ENCODE measurements at regions of chr2 and their contacts with region 1.

Region 1: GRCh38 chr2:27264753-27265535 is 2.1 kb upstream of the SLC30A3 start:
- DNase-seq: no peak
- H3K4me3 ChIP-seq: peak overlapping the region; percentile 43
- CTCF ChIP-seq: peak; percentile 80

Region 2: GRCh38 chr2:27249891-27250651 is 14.9 kb before region 1 on chr2:
- CTCF ChIA-PET with region 1: interaction called, 17 read pairs
- POLR2A ChIA-PET with region 1: no interaction called
- DNase-seq: no peak
- H3K4me3 ChIP-seq: no peak overlapping the region
- CTCF ChIP-seq: peak; percentile 78

Measured in AG04449 (cell line).